Ascending aorta (tissue), 2 donors: ENCODE measurements at regions of chr17 and their contacts with region 1.

Region 1: DNA sequence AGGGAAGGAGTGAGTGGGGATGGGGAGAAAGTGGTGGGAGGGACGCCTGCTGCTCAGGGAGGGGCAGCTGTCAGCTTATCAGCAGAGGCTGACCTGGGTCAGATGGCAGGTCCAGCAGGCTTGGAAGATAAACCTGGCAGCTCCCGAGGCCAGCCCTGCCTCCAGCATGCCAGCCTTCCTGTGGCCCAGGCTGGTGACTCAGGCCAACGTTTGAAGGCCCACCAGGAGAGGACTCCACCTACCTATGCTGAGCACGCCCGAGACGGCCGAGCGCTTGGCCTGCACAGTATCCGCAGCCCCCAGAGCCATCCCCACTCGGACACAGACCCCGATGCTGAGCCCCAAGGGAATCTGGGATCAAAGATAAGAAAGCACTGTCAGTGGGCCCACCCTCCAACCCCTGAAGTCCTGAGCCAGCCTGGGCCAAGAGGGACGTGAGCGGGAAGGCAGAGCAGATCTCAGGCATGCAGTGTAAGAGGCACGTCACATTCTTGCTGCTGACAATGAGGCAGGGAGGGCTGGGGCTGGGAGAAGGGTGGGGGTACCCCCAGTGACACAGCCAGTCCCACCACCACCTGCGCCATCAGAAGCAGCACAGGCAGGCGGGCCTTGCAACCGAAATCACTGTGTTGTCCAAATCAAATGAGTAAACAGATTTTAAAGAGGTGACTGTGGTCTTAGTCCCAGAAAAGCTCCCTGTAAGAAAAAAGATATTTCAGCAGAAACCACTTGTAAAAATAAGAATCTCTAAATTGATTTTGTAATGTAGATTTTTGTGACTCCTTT is 12.4 kb downstream of the SLC47A2 start:
- DNase-seq: no peak
- H3K4me3 ChIP-seq: no peak overlapping the region
- H3K27ac ChIP-seq: peak overlapping the region; percentile 53 to 72
- H3K4me1 ChIP-seq: peaks cover 7 to 13% of the 10 kb centered on the region in 2 donors
- H3K27me3 ChIP-seq: no peaks in the 10 kb centered on the region
- CTCF ChIP-seq: no peak

Region 2: GRCh38 chr17:19766422-19767270 is 62.6 kb after region 1 on chr17:
- intact Hi-C with region 1: loop called (anchors 2 kb)
- DNase-seq: peak in 1 of 2 donors; percentile 86
- H3K4me3 ChIP-seq: no peak overlapping the region
- H3K27ac ChIP-seq: no peak overlapping the region
- H3K4me1 ChIP-seq: peaks cover 0 to 5% of the 10 kb centered on the region in 2 donors
- H3K27me3 ChIP-seq: no peaks in the 10 kb centered on the region
- CTCF ChIP-seq: peak; percentile 94 to 99 (median 97)